ENCODE measurements at regions of chr15 and their contacts with region 1.

Region 1: GRCh38 chr15:98946301-98947255 is 61.0 kb downstream of the PGPEP1L start:
- DNase-seq: peak in 2 of 10 donors; percentile 55 to 59
- H3K4me3 ChIP-seq: no peak overlapping the region
- H3K27ac ChIP-seq: peak overlapping the region in 54 of 59 donors; percentile 3 to 77 (median 57)
- H3K27me3 ChIP-seq: no peaks in the 10 kb centered on the region
- CTCF ChIP-seq: no peak

Region 2: DNA sequence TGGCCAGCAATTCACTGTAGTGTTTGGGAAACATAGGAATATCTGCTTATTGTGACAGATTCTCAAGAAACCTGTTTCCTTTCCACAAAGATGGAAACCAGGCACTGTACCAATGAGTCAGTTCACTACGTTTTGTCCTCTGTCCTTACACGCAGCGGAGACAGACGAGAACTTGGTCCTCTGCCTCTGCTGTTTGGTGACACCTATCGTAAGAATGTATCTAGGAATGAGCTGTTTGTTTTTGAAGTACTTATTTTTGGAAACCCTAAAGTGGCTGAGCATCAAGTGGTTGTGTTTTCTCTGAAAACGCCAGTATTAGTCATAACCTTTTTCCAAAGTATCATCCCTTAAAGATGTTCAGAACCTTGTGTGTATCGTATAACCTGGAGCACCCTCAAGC is 32.0 kb before region 1 on chr15:
- intact Hi-C with region 1: loop called in 1 of 2 experiments (anchors 5 kb)
- DNase-seq: no peak
- H3K4me3 ChIP-seq: no peak overlapping the region
- H3K27ac ChIP-seq: peak overlapping the region in 1 of 59 donors; percentile 18
- H3K27me3 ChIP-seq: no peaks in the 10 kb centered on the region
- CTCF ChIP-seq: no peak

Region 3: GRCh38 chr15:99682455-99682854 is 735.9 kb after region 1 on chr15:
- intact Hi-C with region 1: no loop called
- DNase-seq: no peak
- H3K4me3 ChIP-seq: no peak overlapping the region
- H3K27ac ChIP-seq: peak overlapping the region in 16 of 59 donors; percentile 11 to 49 (median 26)
- H3K27me3 ChIP-seq: no peaks in the 10 kb centered on the region
- CTCF ChIP-seq: no peak